K562 (cell line): ENCODE measurements at regions of chr19 and their contacts with region 1.

Region 1: DNA sequence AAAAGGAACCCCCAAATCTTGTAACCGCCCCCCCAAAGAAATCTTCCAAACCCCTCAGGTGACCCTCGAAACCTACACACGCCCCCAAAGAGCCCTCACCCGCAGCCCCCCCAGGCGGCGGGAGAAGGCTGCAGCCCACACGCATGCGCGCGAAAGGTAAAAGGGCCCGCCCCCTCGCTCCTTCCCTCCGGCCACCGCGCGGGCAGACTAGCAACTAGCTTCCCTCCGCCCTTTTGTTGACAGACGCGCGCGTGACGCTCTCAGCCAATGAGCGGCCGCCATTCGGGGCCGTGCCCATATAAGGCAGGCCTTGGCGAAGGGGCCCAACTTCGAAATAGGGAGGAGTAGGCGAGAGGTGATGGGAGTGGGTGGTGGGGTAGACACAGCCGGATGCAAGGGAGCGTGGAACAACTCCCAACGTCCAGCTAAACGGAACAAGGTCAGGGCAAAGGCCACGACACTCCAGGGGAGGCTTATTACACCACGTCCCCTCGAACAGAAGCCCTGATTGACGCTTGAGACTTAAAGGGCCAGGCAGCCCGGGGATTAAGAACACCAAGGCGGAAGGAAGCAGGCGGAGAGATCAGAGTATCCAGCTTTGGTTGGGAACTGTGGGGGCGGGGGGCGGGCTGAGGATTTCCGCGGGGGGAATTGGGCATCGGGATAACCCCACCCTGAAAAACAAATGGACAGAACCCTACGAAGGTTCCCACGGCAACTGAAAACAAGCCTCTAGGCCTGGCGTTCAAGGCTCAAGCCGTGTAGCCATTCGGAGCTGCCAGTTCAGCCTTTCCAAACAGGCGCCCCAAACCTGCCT is 13.3 kb downstream of the FBXO46 start:
- DNase-seq: peak; percentile 97 to 99 (median 98)
- ATAC-seq: peak; percentile 98
- H3K4me3 ChIP-seq: peak overlapping the region; percentile 63
- H3K27ac ChIP-seq: peak overlapping the region; percentile 96
- H3K4me1 ChIP-seq: peaks cover 22 to 30% of the 10 kb centered on the region in 2 experiments
- H3K27me3 ChIP-seq: no peaks in the 10 kb centered on the region
- CTCF ChIP-seq: peak in 2 of 3 experiments; percentile 35 to 36; a peak in 3 of 6 replicates
- EP300 ChIP-seq: peak; percentile 81
- POLR2A ChIP-seq: peak; percentile 70
- RAD21 ChIP-seq: no peak

Region 2: DNA sequence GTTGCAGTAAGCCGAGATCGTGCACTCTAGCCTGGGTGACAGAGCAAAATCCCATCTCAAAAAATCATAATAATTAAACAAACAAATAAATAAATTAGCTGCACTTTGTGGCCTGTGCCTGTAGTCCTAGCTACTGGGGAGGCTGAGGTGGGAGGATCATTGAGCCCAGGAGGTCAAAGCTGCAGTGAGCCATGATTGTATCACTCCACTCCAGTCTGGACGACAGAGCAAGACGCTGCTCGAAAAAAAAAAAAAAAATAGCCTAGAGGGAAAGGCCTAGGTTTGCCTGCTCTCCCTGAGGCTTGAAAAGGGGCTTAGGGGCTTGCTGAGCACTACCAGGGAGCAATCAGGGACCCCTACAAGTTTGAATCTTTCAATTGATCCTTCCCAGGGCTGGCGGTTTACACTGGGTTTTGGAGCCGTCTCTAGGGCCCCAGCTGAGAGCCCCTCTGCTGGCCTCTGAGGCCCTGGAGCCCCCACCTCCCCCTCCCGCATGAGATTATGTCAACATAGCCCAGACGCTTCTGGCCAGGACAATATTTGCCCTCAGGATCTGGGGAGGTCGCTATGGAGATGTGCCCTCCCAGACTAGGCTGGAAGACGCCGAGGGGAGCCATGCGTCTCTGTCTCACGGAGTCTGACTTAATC is 59.7 kb before region 1 on chr19:
- CTCF ChIA-PET with region 1: no interaction called
- POLR2A ChIA-PET with region 1: no interaction called
- in situ Hi-C with region 1: no loop called
- intact Hi-C with region 1: no loop called
- DNase-seq: peak in 2 of 4 experiments; percentile 19 to 22
- ATAC-seq: peak; percentile 33
- H3K4me3 ChIP-seq: no peak overlapping the region
- H3K27ac ChIP-seq: no peak overlapping the region
- H3K4me1 ChIP-seq: peaks cover 4 to 7% of the 10 kb centered on the region in 2 experiments; a peak in 3 of 5 replicates
- H3K27me3 ChIP-seq: no peaks in the 10 kb centered on the region
- CTCF ChIP-seq: no peak
- EP300 ChIP-seq: no peak
- POLR2A ChIP-seq: no peak
- RAD21 ChIP-seq: no peak

Region 3: DNA sequence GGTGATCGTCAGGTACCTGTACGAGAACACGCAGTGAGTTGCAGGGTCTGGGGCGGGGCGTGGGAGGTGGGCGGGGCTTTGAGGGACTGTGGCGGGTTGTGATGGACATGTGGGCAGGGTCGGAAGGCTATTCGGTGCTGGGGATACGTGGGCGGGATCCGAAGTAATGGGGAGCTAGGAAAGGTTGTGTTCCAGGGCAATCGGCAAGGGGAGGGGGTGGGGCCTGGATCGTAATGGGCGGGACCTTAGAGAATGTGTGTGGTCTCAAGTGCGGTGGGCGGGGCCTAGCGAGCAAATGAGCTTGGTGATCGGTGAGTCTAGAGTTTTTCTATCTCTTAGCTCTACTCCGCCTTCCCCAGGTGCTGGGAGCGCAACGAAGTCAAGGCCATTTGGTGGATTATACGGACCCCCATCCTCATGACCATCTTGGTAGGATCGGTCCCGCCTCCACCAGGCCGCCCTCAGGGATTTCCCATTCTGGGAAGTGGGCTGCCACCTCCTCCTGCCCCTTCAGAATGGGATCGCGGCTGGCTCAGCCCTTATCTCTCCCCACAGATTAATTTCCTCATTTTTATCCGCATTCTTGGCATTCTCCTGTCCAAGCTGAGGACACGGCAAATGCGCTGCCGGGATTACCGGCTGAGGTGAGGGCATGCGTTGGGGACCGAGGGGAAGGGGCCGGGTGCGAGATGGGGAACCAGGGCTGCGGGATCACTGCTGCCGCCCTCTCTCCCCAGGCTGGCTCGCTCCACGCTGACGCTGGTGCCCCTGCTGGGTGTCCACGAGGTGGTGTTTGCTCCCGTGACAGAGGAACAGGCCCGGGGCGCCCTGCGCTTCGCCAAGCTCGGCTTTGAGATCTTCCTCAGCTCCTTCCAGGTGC is 39.8 kb before region 1 on chr19:
- CTCF ChIA-PET with region 1: no interaction called
- POLR2A ChIA-PET with region 1: no interaction called
- in situ Hi-C with region 1: no loop called
- intact Hi-C with region 1: no loop called
- DNase-seq: peak; percentile 51 to 63 (median 56)
- ATAC-seq: peak; percentile 36
- H3K4me3 ChIP-seq: no peak overlapping the region
- H3K27ac ChIP-seq: no peak overlapping the region
- H3K4me1 ChIP-seq: peaks cover 3 to 24% of the 10 kb centered on the region in 2 experiments; a peak in 2 of 5 replicates
- H3K27me3 ChIP-seq: no peaks in the 10 kb centered on the region
- CTCF ChIP-seq: no peak
- EP300 ChIP-seq: no peak
- POLR2A ChIP-seq: no peak
- RAD21 ChIP-seq: no peak

Region 4: DNA sequence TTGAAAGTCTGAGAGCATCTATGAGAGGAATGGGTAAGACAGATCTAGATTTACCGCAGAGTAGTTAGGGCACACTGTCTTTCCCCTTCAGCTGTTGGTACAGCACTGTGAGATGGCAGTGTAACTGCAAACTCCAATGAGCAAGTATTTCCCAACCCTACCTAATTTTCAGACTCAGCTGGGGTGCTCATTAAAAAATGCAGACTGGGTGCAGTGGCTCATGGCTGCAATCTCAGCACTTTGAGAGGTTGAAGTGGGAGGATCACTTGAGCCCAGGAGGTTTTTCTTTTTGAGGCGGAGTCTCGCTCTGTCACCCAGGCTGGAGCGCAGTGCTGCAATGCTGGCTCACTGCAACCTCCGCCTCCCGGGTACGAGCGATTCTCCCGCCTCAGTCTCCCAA is 12.3 kb before region 1 on chr19:
- CTCF ChIA-PET with region 1: no interaction called
- POLR2A ChIA-PET with region 1: interaction called, 46 read pairs
- in situ Hi-C with region 1: no loop called
- intact Hi-C with region 1: no loop called
- DNase-seq: no peak
- ATAC-seq: peak; percentile 37; the same call in 2 of the 3 replicates
- H3K4me3 ChIP-seq: no peak overlapping the region
- H3K27ac ChIP-seq: no peak overlapping the region
- H3K4me1 ChIP-seq: no peaks in the 10 kb centered on the region; a peak in 1 of 5 replicates
- H3K27me3 ChIP-seq: no peaks in the 10 kb centered on the region
- CTCF ChIP-seq: no peak
- EP300 ChIP-seq: no peak
- POLR2A ChIP-seq: no peak
- RAD21 ChIP-seq: no peak

Region 5: GRCh38 chr19:45730389-45731288 is 13.3 kb after region 1 on chr19 and contains the start of gene FBXO46:
- CTCF ChIA-PET with region 1: no interaction called
- POLR2A ChIA-PET with region 1: interaction called, 20 read pairs
- in situ Hi-C with region 1: no loop called
- intact Hi-C with region 1: no loop called
- DNase-seq: peak; percentile 92 to 98 (median 96)
- ATAC-seq: peak; percentile 97
- H3K4me3 ChIP-seq: peak within 1 kb of the TSS; percentile 88
- H3K27ac ChIP-seq: peak within 1 kb of the TSS; percentile 74
- H3K4me1 ChIP-seq: peaks cover 13 to 38% of the 10 kb centered on the region in 2 experiments
- H3K27me3 ChIP-seq: no peaks in the 10 kb centered on the region
- CTCF ChIP-seq: peak in 2 of 3 experiments; percentile 27 to 42; a peak in 4 of 6 replicates
- EP300 ChIP-seq: no peak
- POLR2A ChIP-seq: peak; percentile 90
- RAD21 ChIP-seq: no peak
- polyA plus RNA-seq, gene FBXO46: 1.5 to 4.0 TPM

Region 6: GRCh38 chr19:45770192-45771101 is 53.1 kb after region 1 on chr19:
- CTCF ChIA-PET with region 1: no interaction called
- POLR2A ChIA-PET with region 1: interaction called, 15 read pairs
- in situ Hi-C with region 1: no loop called
- intact Hi-C with region 1: loop called (anchors 1 kb)
- DNase-seq: peak; percentile 93 to 99 (median 96)
- ATAC-seq: peak; percentile 87
- H3K4me3 ChIP-seq: peak overlapping the region; percentile 56
- H3K27ac ChIP-seq: peak overlapping the region; percentile 75
- H3K4me1 ChIP-seq: peaks cover 10 to 69% of the 10 kb centered on the region in 2 experiments; a peak in 4 of 5 replicates
- H3K27me3 ChIP-seq: no peaks in the 10 kb centered on the region
- CTCF ChIP-seq: peak; percentile 83 to 91 (median 91)
- EP300 ChIP-seq: no peak
- POLR2A ChIP-seq: peak; percentile 73
- RAD21 ChIP-seq: peak; percentile 59 to 61